Activated naive CD4-positive, alpha-beta T cell treated with anti-CD3 and anti-CD28 coated beads for 36 hours (primary cell): ENCODE measurements at regions of chr3 and their contacts with region 1.

Region 1: GRCh38 chr3:110296885-110297284 is 774.7 kb upstream of the NECTIN3 start:
- DNase-seq: no peak
- H3K4me3 Mint-ChIP-seq: no peak overlapping the region
- H3K27ac Mint-ChIP-seq: no peak overlapping the region
- H3K4me1 Mint-ChIP-seq: no peaks in the 10 kb centered on the region
- H3K27me3 Mint-ChIP-seq: peaks cover 2% of the 10 kb centered on the region

Region 2: GRCh38 chr3:110070161-110070916 is 226.5 kb before region 1 on chr3:
- CTCF ChIA-PET with region 1: no interaction called
- intact Hi-C with region 1: loop called (anchors 10 kb)
- DNase-seq: no peak
- H3K4me3 Mint-ChIP-seq: no peak overlapping the region
- H3K27ac Mint-ChIP-seq: no peak overlapping the region
- H3K4me1 Mint-ChIP-seq: peaks cover 12% of the 10 kb centered on the region
- H3K27me3 Mint-ChIP-seq: no peaks in the 10 kb centered on the region

Region 3: GRCh38 chr3:110267304-110267845 is 29.5 kb before region 1 on chr3:
- CTCF ChIA-PET with region 1: no interaction called
- intact Hi-C with region 1: no loop called
- DNase-seq: no peak
- H3K4me3 Mint-ChIP-seq: no peak overlapping the region
- H3K27ac Mint-ChIP-seq: no peak overlapping the region
- H3K4me1 Mint-ChIP-seq: no peaks in the 10 kb centered on the region
- H3K27me3 Mint-ChIP-seq: peaks cover 5% of the 10 kb centered on the region